Esophagus squamous epithelium (tissue), 5 donors: ENCODE measurements at regions of chr11 and their contacts with region 1.

Region 1: GRCh38 chr11:9757809-9758636 is 94.1 kb downstream of the SWAP70 start:
- DNase-seq: peak; percentile 45
- H3K4me3 ChIP-seq: peak overlapping the region; percentile 58 to 81 (median 74)
- H3K27ac ChIP-seq: peak overlapping the region; percentile 90 to 94 (median 92)
- H3K4me1 ChIP-seq: peaks cover 51 to 99% (median 55%) of the 10 kb centered on the region in 3 donors
- H3K27me3 ChIP-seq: no peaks in the 10 kb centered on the region
- CTCF ChIP-seq: peak; percentile 56 to 98 (median 96)
- POLR2A ChIP-seq: peak in 3 of 4 donors; percentile 20 to 68 (median 40)

Region 2: DNA sequence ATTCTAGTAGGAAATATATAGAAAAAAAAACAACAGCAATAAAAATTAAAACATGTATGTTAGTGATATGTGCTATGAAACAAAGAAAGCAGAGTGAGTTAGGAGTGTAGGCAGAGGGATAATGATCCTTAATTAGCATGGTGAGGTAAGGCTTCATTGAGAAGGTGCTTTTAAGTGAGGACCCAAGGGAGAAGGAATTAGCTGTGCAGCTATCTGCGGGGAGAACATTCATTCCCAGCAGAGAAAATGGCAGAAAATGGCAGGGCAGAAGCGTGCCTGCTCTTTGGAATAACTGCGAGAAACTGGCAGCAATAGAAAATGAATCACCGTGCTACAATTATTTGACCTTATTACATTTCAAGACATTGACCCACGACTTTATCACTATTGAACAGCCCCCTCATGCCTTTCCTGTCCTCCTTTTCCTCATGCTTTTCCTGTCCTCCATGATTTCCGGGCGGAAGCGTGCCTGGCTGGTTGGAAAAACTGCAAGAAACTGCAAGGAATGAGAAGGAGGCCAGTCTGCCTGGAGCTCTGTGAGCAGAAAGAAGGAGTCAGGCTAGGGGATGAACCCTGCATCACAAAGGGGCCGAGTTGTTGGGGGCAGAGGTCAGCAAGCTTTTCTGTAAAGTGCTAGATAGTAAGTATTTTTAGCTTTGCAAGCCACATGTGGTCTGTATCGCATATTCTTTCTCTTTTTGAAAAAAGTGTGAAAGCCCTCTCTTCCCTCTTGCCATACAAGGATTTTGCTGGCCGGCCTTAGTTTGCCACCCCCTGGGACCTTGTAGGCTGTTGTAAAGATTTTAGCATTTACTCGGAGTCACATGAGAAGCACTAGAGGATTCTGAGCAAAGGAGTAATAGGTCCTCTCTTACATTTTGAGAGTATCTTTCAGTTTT is 131.3 kb before region 1 on chr11:
- intact Hi-C with region 1: no loop called
- DNase-seq: no peak
- H3K4me3 ChIP-seq: no peak overlapping the region
- H3K27ac ChIP-seq: peak overlapping the region in 3 of 4 donors; percentile 29 to 39 (median 34)
- H3K4me1 ChIP-seq: peaks cover 0 to 8% (median 0%) of the 10 kb centered on the region in 3 donors
- H3K27me3 ChIP-seq: no peaks in the 10 kb centered on the region
- CTCF ChIP-seq: no peak
- POLR2A ChIP-seq: no peak

Region 3: GRCh38 chr11:9972989-9973388 is 215.0 kb after region 1 on chr11:
- intact Hi-C with region 1: loop called (anchors 5 kb)
- DNase-seq: no peak
- H3K4me3 ChIP-seq: no peak overlapping the region
- H3K27ac ChIP-seq: peak overlapping the region in 1 of 4 donors; percentile 22
- H3K4me1 ChIP-seq: peaks cover 0 to 3% (median 0%) of the 10 kb centered on the region in 3 donors
- H3K27me3 ChIP-seq: no peaks in the 10 kb centered on the region
- CTCF ChIP-seq: peak; percentile 15 to 75 (median 64)
- POLR2A ChIP-seq: no peak

Region 4: DNA sequence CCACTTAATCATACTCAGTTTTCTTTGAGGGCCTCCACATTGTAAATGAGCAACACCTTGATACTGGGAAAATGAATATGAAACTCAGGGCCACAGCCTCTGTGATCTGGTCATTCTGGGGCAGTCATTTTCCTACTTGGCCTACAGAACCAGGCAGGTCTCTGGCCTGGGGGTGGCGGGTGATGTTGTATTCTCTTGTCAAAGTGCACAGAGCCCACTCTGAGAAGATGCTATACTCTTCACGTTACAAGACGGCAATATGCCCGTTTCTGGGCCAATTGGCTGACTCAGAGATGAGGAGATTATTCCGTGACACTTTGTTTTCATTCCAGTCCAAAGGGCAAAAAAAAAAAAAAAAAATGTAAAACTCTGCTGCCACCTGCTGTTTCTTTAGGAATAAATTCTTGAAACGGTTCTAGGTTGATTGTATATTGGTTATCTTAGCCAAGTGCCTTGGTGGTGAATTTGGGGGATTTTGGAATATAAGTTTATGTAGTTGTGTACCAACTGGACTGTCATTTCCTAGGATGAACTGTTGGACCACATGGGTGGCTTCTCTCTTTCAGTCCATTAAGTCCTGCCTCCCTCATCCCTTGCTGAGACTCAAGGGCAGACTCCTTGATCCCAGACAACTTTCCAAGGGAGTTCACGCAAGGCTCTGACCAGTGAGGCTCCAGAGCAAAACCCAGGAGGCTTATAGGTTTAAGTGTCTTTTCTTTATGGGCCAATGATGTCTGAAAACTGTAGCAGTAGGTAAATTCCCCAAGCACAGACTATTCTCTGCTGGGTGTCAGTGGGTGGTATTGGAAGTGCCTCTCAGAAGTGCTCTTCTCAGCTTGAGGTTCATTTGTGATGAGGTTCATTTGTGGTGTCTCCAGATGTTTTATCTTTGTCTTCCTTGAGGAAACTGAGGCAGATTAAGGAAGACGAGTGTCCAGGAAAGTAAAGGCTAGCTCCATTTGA is 565.1 kb after region 1 on chr11:
- intact Hi-C with region 1: loop called (anchors 10 kb)
- DNase-seq: no peak
- H3K4me3 ChIP-seq: peak overlapping the region in 1 of 4 donors; percentile 30
- H3K27ac ChIP-seq: peak overlapping the region in 3 of 4 donors; percentile 61 to 85 (median 77)
- H3K4me1 ChIP-seq: peaks cover 0 to 57% (median 32%) of the 10 kb centered on the region in 3 donors
- H3K27me3 ChIP-seq: no peaks in the 10 kb centered on the region
- CTCF ChIP-seq: peak; percentile 32 to 71 (median 50)
- POLR2A ChIP-seq: no peak